A673 (cell line): ENCODE measurements at regions of chr7 and their contacts with region 1.

Region 1: DNA sequence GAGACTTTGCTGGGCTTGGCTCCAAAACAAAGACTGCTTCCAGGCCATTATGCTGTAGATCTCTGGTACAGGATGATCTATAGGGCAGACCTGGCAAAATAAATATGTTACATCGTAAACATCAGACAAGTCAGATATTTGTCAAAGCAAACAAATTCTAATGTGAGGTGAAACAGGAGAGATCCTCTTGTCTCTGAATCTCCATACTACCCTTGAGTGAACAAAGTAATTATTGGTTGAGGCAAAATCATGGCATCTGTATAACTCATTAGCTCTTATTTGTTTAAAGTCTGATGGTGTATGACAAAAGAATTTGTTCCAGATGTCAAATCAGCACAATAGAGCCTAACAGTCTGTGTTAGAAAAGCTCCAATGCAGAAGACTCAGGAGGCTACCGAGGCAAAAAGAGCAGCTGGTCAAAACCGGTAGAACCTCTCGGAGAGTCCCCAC is 1291.5 kb downstream of the TYW1 start:
- DNase-seq: no peak
- H3K4me3 ChIP-seq: no peak overlapping the region
- H3K27ac ChIP-seq: no peak overlapping the region
- H3K4me1 ChIP-seq: no peaks in the 10 kb centered on the region
- H3K27me3 ChIP-seq: no peaks in the 10 kb centered on the region
- CTCF ChIP-seq: no peak

Region 2: DNA sequence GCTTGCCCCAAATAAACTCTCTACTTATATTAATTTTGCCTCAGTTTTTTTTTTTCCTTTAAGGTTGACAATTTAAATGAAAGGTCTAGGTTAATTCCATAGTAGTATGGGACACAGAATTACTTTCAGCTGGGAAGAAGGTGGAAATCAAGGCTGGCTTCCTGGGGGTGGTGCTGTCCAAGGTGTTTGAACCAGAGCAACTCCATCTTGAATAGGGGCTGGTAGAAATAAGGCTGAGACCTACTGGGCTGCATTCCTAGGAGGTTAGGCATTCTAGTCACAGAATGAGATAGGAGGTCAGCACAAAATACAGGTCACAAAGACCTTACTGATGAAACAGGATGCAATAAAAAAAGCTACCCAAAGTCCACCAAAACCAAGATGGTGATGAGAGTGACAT is 119.3 kb after region 1 on chr7:
- CTCF ChIA-PET with region 1: no interaction called
- POLR2A ChIA-PET with region 1: interaction called, 12 read pairs
- intact Hi-C with region 1: no loop called
- DNase-seq: no peak
- H3K4me3 ChIP-seq: no peak overlapping the region
- H3K27ac ChIP-seq: no peak overlapping the region
- H3K4me1 ChIP-seq: no peaks in the 10 kb centered on the region
- H3K27me3 ChIP-seq: no peaks in the 10 kb centered on the region
- CTCF ChIP-seq: no peak